GM12878 (cell line): ENCODE measurements at regions of chr2 and their contacts with region 1.

Region 1: DNA sequence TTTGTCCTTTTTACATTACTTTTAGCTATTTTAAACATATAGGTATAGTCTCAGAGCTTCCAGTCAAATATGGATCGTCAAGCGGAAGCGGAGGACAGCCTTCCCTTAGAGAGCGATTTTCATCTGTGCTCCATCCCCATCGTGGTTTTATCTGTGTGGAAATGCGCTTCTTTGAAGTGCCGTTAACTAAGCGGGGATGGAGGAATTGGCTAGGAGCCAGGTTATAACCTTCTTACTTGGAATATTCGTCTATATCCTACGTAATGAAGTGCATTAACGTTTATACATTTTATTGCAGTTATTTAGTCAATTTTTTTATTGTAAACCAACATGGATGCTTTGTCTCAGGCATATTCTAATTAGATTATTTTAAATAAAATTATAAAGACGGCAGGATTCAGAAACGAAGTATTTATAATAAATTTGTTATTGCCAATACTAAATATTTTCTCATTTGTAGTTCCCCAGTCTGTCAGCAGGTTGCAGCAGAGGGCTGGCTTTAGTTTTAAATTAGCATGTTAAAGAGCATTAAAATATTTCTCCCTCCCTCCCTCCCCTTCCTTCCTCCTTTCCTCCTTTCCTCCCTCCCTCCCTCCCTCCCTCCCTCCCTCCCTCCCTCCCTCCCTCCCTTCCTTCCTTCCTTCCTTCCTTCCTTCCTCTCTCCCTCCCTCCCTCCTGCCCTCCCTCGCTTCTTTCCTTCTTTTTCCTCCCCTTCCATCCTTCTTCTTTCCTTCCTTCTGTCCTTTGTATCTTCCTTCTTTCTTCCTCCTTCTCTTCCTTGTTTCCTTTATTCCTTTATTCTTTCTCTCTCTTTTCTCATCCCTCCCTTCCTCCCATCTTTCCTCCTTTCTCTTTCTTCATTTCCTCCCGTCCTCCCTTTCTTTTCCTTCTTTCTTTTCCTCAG is 80.6 kb upstream of the DOCK10 start:
- DNase-seq: no peak
- ATAC-seq: peak; percentile 59
- H3K4me3 ChIP-seq: no peak overlapping the region
- H3K27ac ChIP-seq: no peak overlapping the region
- H3K4me1 ChIP-seq: no peaks in the 10 kb centered on the region
- H3K27me3 ChIP-seq: no peaks in the 10 kb centered on the region; a peak in 1 of 4 replicates
- CTCF ChIP-seq: peak; percentile 42 to 63 (median 57); a peak in 5 of 6 replicates
- EP300 ChIP-seq: no peak
- POLR2A ChIP-seq: no peak
- RAD21 ChIP-seq: peak; percentile 77

Region 2: DNA sequence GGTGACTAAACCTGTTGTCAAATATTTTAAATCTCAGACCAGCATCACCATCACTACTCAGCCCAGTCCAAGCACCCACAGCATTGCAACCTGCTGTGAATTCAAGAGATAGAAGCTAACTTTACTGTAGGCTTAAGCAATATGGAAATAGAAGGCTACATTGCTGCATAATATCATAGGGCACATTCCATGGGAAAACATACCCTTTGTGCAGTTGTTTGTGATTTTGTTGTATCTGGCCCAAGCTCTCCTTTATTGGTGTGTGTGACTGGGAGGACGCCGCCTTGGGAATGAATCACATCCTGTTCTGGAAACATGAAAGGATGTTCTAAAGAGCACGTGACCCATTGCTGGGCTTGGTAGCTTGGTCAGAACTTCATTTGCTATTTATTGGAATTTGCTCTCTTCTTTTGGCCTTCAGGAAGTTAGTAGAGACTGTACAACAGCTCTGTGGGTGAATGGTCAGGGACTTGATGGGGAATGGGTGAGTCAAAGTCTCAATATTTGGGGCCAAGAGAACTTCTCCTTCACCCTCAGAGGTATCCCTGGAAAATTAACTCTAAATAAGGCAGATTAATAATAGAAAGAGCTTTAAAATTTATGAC is 977.0 kb before region 1 on chr2:
- CTCF ChIA-PET with region 1: no interaction called
- POLR2A ChIA-PET with region 1: no interaction called
- RAD21 ChIA-PET with region 1: no interaction called
- SMC1A ChIA-PET with region 1: no interaction called
- in situ Hi-C with region 1: no loop called
- intact Hi-C with region 1: no loop called
- DNase-seq: no peak
- ATAC-seq: no peak
- H3K4me3 ChIP-seq: no peak overlapping the region
- H3K27ac ChIP-seq: no peak overlapping the region
- H3K4me1 ChIP-seq: no peaks in the 10 kb centered on the region
- H3K27me3 ChIP-seq: no peaks in the 10 kb centered on the region; a peak in 1 of 4 replicates
- CTCF ChIP-seq: no peak
- EP300 ChIP-seq: no peak
- POLR2A ChIP-seq: no peak
- RAD21 ChIP-seq: no peak

Region 3: GRCh38 chr2:225192869-225193268 is 70.0 kb after region 1 on chr2:
- CTCF ChIA-PET with region 1: no interaction called
- POLR2A ChIA-PET with region 1: no interaction called
- RAD21 ChIA-PET with region 1: no interaction called
- SMC1A ChIA-PET with region 1: no interaction called
- in situ Hi-C with region 1: no loop called
- intact Hi-C with region 1: no loop called
- DNase-seq: no peak
- ATAC-seq: no peak
- H3K4me3 ChIP-seq: no peak overlapping the region
- H3K27ac ChIP-seq: no peak overlapping the region
- H3K4me1 ChIP-seq: no peaks in the 10 kb centered on the region
- H3K27me3 ChIP-seq: no peaks in the 10 kb centered on the region
- CTCF ChIP-seq: no peak
- EP300 ChIP-seq: no peak
- POLR2A ChIP-seq: no peak
- RAD21 ChIP-seq: no peak

Region 4: GRCh38 chr2:225282858-225283710 is 160.2 kb after region 1 on chr2:
- CTCF ChIA-PET with region 1: interaction called, 14 read pairs
- POLR2A ChIA-PET with region 1: no interaction called
- RAD21 ChIA-PET with region 1: interaction called, 4 read pairs
- SMC1A ChIA-PET with region 1: interaction called, 5 read pairs
- in situ Hi-C with region 1: no loop called
- intact Hi-C with region 1: loop called (anchors 2 kb)
- DNase-seq: no peak
- ATAC-seq: peak; percentile 96
- H3K4me3 ChIP-seq: no peak overlapping the region
- H3K27ac ChIP-seq: no peak overlapping the region
- H3K4me1 ChIP-seq: no peaks in the 10 kb centered on the region
- H3K27me3 ChIP-seq: no peaks in the 10 kb centered on the region
- CTCF ChIP-seq: peak; percentile 75 to 87 (median 86)
- EP300 ChIP-seq: no peak
- POLR2A ChIP-seq: no peak
- RAD21 ChIP-seq: peak; percentile 66

Region 5: GRCh38 chr2:225466891-225467604 is 344.2 kb after region 1 on chr2:
- CTCF ChIA-PET with region 1: interaction called, 4 read pairs
- POLR2A ChIA-PET with region 1: interaction called, 15 read pairs
- RAD21 ChIA-PET with region 1: no interaction called
- SMC1A ChIA-PET with region 1: no interaction called
- in situ Hi-C with region 1: no loop called
- intact Hi-C with region 1: no loop called
- DNase-seq: no peak
- ATAC-seq: no peak
- H3K4me3 ChIP-seq: no peak overlapping the region
- H3K27ac ChIP-seq: no peak overlapping the region
- H3K4me1 ChIP-seq: no peaks in the 10 kb centered on the region
- H3K27me3 ChIP-seq: no peaks in the 10 kb centered on the region
- CTCF ChIP-seq: no peak
- EP300 ChIP-seq: no peak
- POLR2A ChIP-seq: no peak
- RAD21 ChIP-seq: no peak

Region 6: DNA sequence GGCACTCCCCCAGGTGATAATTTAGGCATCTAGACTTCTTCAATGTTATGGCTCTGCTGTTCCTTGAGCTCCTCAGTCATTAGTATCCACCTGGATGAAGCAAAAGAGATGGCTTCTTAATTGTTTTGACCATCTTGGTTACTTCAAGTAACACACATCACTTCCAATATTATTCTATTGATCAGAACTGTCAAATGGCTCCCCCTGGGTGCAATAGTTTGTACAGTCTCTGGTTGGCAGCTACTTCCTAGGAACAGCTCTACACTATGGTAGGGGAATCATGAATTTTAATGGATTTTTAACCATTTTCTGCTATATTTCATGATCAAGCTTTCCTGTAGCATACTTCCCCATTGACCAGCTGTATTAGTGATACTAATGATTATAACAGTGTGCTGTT is 433.6 kb after region 1 on chr2:
- CTCF ChIA-PET with region 1: interaction called, 8 read pairs
- POLR2A ChIA-PET with region 1: no interaction called
- RAD21 ChIA-PET with region 1: interaction called, 7 read pairs
- SMC1A ChIA-PET with region 1: interaction called, 8 read pairs
- in situ Hi-C with region 1: no loop called
- intact Hi-C with region 1: loop called (anchors 5 kb)
- DNase-seq: no peak
- ATAC-seq: peak; percentile 40; the same call in 2 of the 3 replicates
- H3K4me3 ChIP-seq: no peak overlapping the region
- H3K27ac ChIP-seq: no peak overlapping the region
- H3K4me1 ChIP-seq: no peaks in the 10 kb centered on the region
- H3K27me3 ChIP-seq: no peaks in the 10 kb centered on the region
- CTCF ChIP-seq: no peak; a peak in 1 of 6 replicates
- EP300 ChIP-seq: no peak
- POLR2A ChIP-seq: no peak
- RAD21 ChIP-seq: no peak